Activated B cell treated with CpG ODN at 0.5 μM for 24 hours (primary cell): ENCODE measurements at regions of chr5 and their contacts with region 1.

Region 1: DNA sequence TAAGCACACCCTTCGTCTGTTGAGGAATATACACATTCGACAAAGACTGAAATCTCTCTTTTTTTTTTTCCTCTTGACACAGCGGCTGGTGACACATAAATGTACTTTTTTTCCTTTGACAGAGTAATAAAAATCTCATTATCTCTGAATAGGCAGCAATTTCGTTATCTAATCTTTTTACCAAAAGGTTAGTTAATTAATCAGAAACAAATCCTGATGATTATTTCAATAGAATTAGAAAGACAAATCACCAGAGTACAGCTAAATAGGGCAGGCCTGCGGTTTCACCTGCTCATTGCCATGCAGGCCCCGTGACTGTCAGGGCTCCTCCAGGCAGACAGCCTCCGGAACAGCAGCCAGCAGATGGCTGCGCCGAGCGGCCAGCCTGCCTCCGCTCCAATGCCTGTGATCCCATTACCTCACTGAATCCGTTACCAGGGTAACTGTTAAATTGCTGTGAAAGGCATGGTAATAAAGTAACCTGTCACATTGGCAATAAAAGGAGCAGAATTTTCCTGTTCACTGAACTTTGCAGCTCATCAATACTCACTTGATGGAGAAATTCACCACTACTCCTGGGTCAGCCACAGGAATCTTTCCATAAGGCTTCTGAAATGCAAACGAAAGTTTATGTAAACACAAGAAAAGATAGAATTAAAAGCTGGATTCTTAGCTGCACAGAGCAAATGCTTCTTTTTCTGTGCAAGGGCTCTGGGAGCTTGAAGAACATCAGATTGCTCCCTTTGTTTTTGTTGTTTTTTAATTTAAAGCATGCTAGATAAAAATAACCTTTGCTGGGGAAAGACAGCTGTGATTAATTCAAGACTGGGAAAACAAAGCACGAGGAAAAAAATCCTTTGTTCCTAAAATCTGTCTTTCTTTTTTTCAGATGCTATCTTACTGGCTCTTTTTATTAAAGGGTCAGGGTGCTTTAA is 666.4 kb upstream of the ZNF608 start:
- DNase-seq: peak; percentile 18
- ATAC-seq: peak; percentile 72
- H3K4me3 Mint-ChIP-seq: peak overlapping the region; percentile 29
- H3K27ac Mint-ChIP-seq: no peak overlapping the region
- H3K4me1 Mint-ChIP-seq: peaks cover 38% of the 10 kb centered on the region
- H3K27me3 Mint-ChIP-seq: no peaks in the 10 kb centered on the region
- CTCF ChIP-seq: no peak

Region 2: DNA sequence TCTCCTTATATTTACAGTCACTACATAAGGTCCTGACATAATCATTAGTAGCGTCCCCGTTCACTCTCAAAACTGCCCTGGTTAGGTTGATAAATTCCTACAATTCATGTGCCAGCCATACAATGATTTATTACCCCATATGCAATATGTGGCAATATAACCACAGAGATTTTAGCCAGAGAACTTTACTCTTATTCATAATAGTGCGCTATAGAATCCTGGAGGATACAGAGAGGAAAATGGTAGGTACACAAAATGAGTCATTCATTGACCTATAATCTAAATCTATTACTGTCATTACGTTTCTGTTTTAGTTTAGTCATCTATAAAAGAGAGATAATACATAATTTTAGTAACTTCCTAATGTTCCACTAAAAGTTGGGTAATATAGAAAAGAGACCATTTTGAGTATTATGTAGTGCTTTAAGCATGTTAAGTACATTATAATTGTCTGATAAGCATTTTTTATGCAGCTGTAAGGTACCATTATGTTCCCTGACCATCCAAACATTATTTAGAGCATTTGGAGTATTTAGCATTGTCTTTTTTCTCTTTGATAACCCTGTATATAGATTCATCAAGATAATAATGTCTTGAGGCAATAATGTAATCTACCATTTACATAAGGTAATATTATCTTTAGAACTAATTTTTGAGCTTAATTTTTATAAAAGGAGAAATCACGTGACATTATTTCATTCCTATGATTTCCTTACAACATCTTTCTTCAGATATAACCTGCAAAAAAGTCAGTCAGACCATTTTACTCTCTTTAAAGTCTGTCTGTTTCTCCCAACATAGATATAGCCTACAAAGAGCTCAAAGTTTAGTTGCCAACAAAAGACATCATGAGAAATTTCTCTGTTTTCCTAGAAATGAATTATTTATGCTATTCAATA is 10.9 kb before region 1 on chr5:
- CTCF ChIA-PET with region 1: interaction called, 3 read pairs
- POLR2A ChIA-PET with region 1: no interaction called
- intact Hi-C with region 1: loop called (anchors 2 kb)
- DNase-seq: no peak
- ATAC-seq: no peak
- H3K4me3 Mint-ChIP-seq: no peak overlapping the region
- H3K27ac Mint-ChIP-seq: no peak overlapping the region
- H3K4me1 Mint-ChIP-seq: no peaks in the 10 kb centered on the region
- H3K27me3 Mint-ChIP-seq: no peaks in the 10 kb centered on the region
- CTCF ChIP-seq: no peak